ENCODE measurements at regions of chr14 and their contacts with region 1.

Region 1: GRCh38 chr14:48398675-48399282 is 723.4 kb upstream of the MDGA2 start:
- DNase-seq: peak; percentile 6
- H3K4me3 Mint-ChIP-seq: no peak overlapping the region
- H3K27ac Mint-ChIP-seq: no peak overlapping the region
- H3K4me1 Mint-ChIP-seq: no peaks in the 10 kb centered on the region
- H3K27me3 Mint-ChIP-seq: no peaks in the 10 kb centered on the region
- CTCF ChIP-seq: no peak

Region 2: DNA sequence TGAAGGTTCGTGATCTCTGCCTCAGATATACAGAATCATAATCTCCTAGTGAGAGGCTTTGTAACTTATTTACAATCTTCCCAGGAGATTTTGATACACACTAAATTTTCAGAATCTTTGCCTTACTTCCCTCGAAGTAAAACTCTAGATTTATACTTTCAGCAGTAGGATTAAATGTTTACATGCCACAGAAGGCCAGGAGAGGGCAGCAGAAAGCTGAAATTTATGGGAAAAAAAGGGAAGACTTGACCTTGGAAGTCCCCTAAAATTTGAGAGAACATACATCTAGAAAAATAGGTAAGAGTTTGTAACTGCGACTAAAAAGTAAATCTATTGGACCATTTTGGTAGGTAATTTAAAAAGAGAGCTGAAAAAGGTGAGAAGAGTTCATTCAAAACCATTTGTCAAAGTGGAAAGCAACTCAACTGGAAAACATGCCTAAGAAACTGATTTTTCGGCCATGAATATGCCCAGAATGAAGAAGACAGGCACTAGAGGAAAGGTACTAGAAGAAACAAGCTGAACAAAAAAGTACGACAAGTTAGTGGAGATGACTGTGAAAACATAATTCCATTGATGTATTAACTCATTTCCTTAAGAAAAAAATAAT is 481.3 kb before region 1 on chr14:
- CTCF ChIA-PET with region 1: no interaction called
- intact Hi-C with region 1: loop called (anchors 1 kb)
- DNase-seq: peak; percentile 13
- H3K4me3 Mint-ChIP-seq: no peak overlapping the region
- H3K27ac Mint-ChIP-seq: no peak overlapping the region
- H3K4me1 Mint-ChIP-seq: no peaks in the 10 kb centered on the region
- H3K27me3 Mint-ChIP-seq: no peaks in the 10 kb centered on the region
- CTCF ChIP-seq: peak; percentile 8

Region 3: DNA sequence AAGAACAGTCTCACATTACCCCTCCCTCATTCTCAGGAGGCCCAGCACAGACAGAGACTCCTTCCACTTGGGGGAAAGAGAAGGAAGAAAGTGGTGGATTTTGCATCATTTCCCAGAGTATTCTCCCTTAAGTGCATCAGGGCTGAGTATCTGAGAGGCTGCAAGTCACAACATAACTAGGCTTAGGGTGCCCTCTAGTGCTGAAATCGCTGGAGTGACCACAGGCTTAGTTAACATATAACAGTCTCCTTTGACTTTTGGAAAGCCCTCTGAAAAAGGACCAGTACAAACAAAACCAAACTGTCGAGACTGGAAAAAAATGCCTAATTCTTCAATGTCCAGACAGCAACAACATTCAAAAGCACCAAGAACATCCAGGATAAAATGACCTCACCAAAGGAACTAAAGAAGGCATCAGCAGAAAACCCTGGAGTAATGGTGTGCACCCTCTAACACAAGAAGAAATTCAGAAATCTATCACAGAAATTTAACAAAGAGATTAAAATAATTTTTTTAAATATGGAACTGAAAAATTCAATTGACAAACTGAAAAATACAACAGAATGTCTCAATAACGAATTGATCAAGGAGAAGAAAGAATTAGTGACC is 775.1 kb after region 1 on chr14:
- CTCF ChIA-PET with region 1: no interaction called
- intact Hi-C with region 1: loop called (anchors 5 kb)
- DNase-seq: peak; percentile 68
- H3K4me3 Mint-ChIP-seq: no peak overlapping the region
- H3K27ac Mint-ChIP-seq: no peak overlapping the region
- H3K4me1 Mint-ChIP-seq: no peaks in the 10 kb centered on the region
- H3K27me3 Mint-ChIP-seq: no peaks in the 10 kb centered on the region
- CTCF ChIP-seq: peak; percentile 41

Region 4: GRCh38 chr14:49641697-49642129 is 1242.9 kb after region 1 on chr14:
- CTCF ChIA-PET with region 1: no interaction called
- intact Hi-C with region 1: no loop called
- DNase-seq: no peak
- H3K4me3 Mint-ChIP-seq: no peak overlapping the region
- H3K27ac Mint-ChIP-seq: peak overlapping the region; percentile 43
- H3K4me1 Mint-ChIP-seq: peaks cover 27% of the 10 kb centered on the region
- H3K27me3 Mint-ChIP-seq: no peaks in the 10 kb centered on the region
- CTCF ChIP-seq: no peak

Measured in Calu3 (cell line).